Activated B cell treated with CpG ODN at 0.5 μM for 24 hours (primary cell): ENCODE measurements at regions of chr11 and their contacts with region 1.

Region 1: GRCh38 chr11:17077520-17078401 is at the start of gene RPS13:
- DNase-seq: peak; percentile 86
- ATAC-seq: peak; percentile 94
- H3K4me3 Mint-ChIP-seq: peak within 1 kb of the TSS; percentile 99
- H3K27ac Mint-ChIP-seq: peak within 1 kb of the TSS; percentile 96
- H3K4me1 Mint-ChIP-seq: peaks cover 38% of the 10 kb centered on the region
- H3K27me3 Mint-ChIP-seq: no peaks in the 10 kb centered on the region
- CTCF ChIP-seq: no peak
- total RNA-seq, gene RPS13: 1,617 and 1,778 TPM in 2 replicates

Region 2: GRCh38 chr11:16820324-16821092 is 257.3 kb before region 1 on chr11:
- CTCF ChIA-PET with region 1: no interaction called
- POLR2A ChIA-PET with region 1: no interaction called
- intact Hi-C with region 1: loop called (anchors 5 kb)
- DNase-seq: peak; percentile 23
- ATAC-seq: peak; percentile 91
- H3K4me3 Mint-ChIP-seq: no peak overlapping the region
- H3K27ac Mint-ChIP-seq: peak overlapping the region; percentile 7
- H3K4me1 Mint-ChIP-seq: peaks cover 6% of the 10 kb centered on the region
- H3K27me3 Mint-ChIP-seq: no peaks in the 10 kb centered on the region
- CTCF ChIP-seq: peak; percentile 41

Region 3: GRCh38 chr11:16945671-16946469 is 131.9 kb before region 1 on chr11:
- CTCF ChIA-PET with region 1: no interaction called
- POLR2A ChIA-PET with region 1: interaction called, 3 read pairs
- intact Hi-C with region 1: loop called (anchors 1 kb)
- DNase-seq: no peak
- ATAC-seq: peak; percentile 77
- H3K4me3 Mint-ChIP-seq: peak overlapping the region; percentile 61
- H3K27ac Mint-ChIP-seq: peak overlapping the region; percentile 57
- H3K4me1 Mint-ChIP-seq: peaks cover 17% of the 10 kb centered on the region
- H3K27me3 Mint-ChIP-seq: no peaks in the 10 kb centered on the region
- CTCF ChIP-seq: no peak

Region 4: DNA sequence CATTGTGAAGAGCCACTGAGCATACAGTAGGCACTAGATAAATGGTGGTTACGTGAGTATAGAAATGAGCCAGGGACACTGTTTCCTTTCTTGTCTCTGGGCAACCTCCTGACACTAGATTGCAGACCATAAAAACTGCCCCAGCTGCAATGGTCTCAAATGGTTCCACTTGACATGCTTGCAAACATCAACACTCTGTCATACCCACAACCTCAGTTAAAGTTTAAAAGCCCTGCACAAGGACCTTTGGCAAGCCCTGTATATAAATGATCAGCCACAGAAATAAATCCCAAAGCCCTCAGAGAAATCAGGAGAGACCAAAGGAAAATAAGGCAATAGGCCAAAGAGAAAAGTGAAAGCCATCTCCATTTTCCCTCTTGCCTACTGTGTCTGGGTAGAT is 84.3 kb before region 1 on chr11:
- CTCF ChIA-PET with region 1: no interaction called
- POLR2A ChIA-PET with region 1: no interaction called
- intact Hi-C with region 1: no loop called
- DNase-seq: no peak
- ATAC-seq: no peak
- H3K4me3 Mint-ChIP-seq: no peak overlapping the region
- H3K27ac Mint-ChIP-seq: no peak overlapping the region
- H3K4me1 Mint-ChIP-seq: no peaks in the 10 kb centered on the region
- H3K27me3 Mint-ChIP-seq: no peaks in the 10 kb centered on the region
- CTCF ChIP-seq: no peak

Region 5: GRCh38 chr11:17207317-17208258 is 129.8 kb after region 1 on chr11 and contains the start of gene PIK3C2A:
- CTCF ChIA-PET with region 1: no interaction called
- POLR2A ChIA-PET with region 1: interaction called, 75 read pairs
- intact Hi-C with region 1: loop called (anchors 1 kb)
- DNase-seq: peak; percentile 91
- ATAC-seq: peak; percentile 95
- H3K4me3 Mint-ChIP-seq: peak within 1 kb of the TSS; percentile 99
- H3K27ac Mint-ChIP-seq: peak within 1 kb of the TSS; percentile 99
- H3K4me1 Mint-ChIP-seq: peaks cover 40% of the 10 kb centered on the region
- H3K27me3 Mint-ChIP-seq: no peaks in the 10 kb centered on the region
- CTCF ChIP-seq: no peak
- total RNA-seq, gene PIK3C2A: 35.9 and 41.2 TPM in 2 replicates

Region 6: DNA sequence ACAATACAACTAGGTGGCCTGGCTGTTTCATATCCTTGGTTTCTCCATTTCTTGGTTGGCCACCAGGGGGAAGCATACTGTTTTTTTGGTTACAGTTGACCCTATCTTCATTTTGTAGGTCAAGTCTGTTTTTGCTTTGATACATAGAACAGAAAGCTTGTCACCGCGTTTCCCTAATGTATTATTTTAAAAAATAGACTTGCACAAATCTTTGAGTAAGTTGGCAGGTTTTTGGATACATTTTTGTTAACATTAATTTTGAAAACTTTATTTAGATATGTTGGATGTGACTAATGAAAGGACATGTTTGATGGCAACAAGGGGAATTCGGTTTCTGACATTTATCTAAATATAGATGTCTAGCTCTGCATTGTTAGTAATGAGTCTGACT is 276.8 kb after region 1 on chr11:
- CTCF ChIA-PET with region 1: no interaction called
- POLR2A ChIA-PET with region 1: no interaction called
- intact Hi-C with region 1: loop called (anchors 1 kb)
- DNase-seq: no peak
- ATAC-seq: no peak
- H3K4me3 Mint-ChIP-seq: peak overlapping the region; percentile 87
- H3K27ac Mint-ChIP-seq: no peak overlapping the region
- H3K4me1 Mint-ChIP-seq: peaks cover 32% of the 10 kb centered on the region
- H3K27me3 Mint-ChIP-seq: peaks cover 32% of the 10 kb centered on the region
- CTCF ChIP-seq: peak; percentile 45

Region 7: GRCh38 chr11:18012863-18013781 is 935.4 kb after region 1 on chr11 and contains the start of gene SERGEF:
- CTCF ChIA-PET with region 1: no interaction called
- POLR2A ChIA-PET with region 1: no interaction called
- intact Hi-C with region 1: loop called (anchors 1 kb)
- DNase-seq: peak; percentile 96
- ATAC-seq: peak; percentile 94
- H3K4me3 Mint-ChIP-seq: peak within 1 kb of the TSS; percentile 100
- H3K27ac Mint-ChIP-seq: peak within 1 kb of the TSS; percentile 99
- H3K4me1 Mint-ChIP-seq: peaks cover 16% of the 10 kb centered on the region
- H3K27me3 Mint-ChIP-seq: no peaks in the 10 kb centered on the region
- CTCF ChIP-seq: no peak
- total RNA-seq, gene SERGEF: 38.4 and 47.4 TPM in 2 replicates